H1 (cell line): ENCODE measurements at regions of chr14 and their contacts with region 1.

Region 1: GRCh38 chr14:77275601-77276017 is 4.6 kb upstream of the NGB start:
- DNase-seq: no peak
- H3K4me3 ChIP-seq: no peak overlapping the region
- H3K27ac ChIP-seq: no peak overlapping the region
- H3K4me1 ChIP-seq: peaks cover 0 to 4% (median 3%) of the 10 kb centered on the region in 4 experiments; a peak in 2 of 7 replicates
- H3K27me3 ChIP-seq: peaks cover 8 to 24% (median 23%) of the 10 kb centered on the region in 4 experiments
- CTCF ChIP-seq: peak; percentile 36 to 44 (median 38); a peak in 3 of 4 replicates
- EP300 ChIP-seq: no peak
- POLR2A ChIP-seq: no peak
- RAD21 ChIP-seq: peak; percentile 48 to 57

Region 2: GRCh38 chr14:77139540-77140358 is 135.9 kb before region 1 on chr14:
- CTCF ChIA-PET with region 1: interaction called, 14 read pairs
- POLR2A ChIA-PET with region 1: no interaction called
- DNase-seq: peak in 1 of 2 experiments; percentile 93
- H3K4me3 ChIP-seq: peak overlapping the region; percentile 69 to 79 (median 78)
- H3K27ac ChIP-seq: no peak overlapping the region
- H3K4me1 ChIP-seq: peaks cover 9 to 37% (median 22%) of the 10 kb centered on the region in 4 experiments
- H3K27me3 ChIP-seq: peaks cover 0 to 4% (median 2%) of the 10 kb centered on the region in 4 experiments; a peak in 3 of 7 replicates
- CTCF ChIP-seq: peak; percentile 73 to 90 (median 79)
- EP300 ChIP-seq: peak in 1 of 2 experiments; percentile 51; a peak in 1 of 3 replicates
- POLR2A ChIP-seq: no peak
- RAD21 ChIP-seq: peak; percentile 76 to 77

Region 3: DNA sequence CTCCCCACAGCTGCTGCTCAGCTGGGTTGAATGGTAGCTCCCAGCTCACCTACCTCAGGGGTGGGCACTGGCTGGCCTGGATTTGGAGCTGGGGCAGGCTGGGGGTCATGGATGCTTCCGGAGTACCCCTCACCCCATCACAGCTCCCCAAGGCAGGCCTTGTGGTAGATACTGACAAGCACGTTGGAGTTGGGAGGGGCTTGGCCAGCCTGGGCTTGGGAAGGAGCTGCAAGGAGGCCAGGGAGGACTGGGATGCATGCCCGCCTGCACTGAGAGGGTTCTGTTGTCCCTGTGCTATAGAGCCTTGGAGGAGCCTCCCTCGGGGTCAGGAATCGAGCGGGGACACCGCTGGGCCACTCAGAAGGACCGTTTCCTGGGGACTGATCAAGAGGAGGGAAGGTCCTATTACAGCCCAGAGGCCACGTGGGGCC is 79.8 kb before region 1 on chr14:
- CTCF ChIA-PET with region 1: interaction called, 14 read pairs
- POLR2A ChIA-PET with region 1: no interaction called
- DNase-seq: no peak
- H3K4me3 ChIP-seq: no peak overlapping the region
- H3K27ac ChIP-seq: no peak overlapping the region; the same call in 1 of the 2 replicates
- H3K4me1 ChIP-seq: no peaks in the 10 kb centered on the region; a peak in 1 of 7 replicates
- H3K27me3 ChIP-seq: no peaks in the 10 kb centered on the region
- CTCF ChIP-seq: no peak
- EP300 ChIP-seq: no peak
- POLR2A ChIP-seq: no peak
- RAD21 ChIP-seq: no peak